Sciatic nerve (tissue), 2 donors: ENCODE measurements at regions of chr11 and their contacts with region 1.

Region 1: GRCh38 chr11:84788220-84788619 is 838.9 kb downstream of the DLG2 start:
- DNase-seq: no peak
- ATAC-seq: no peak

Region 2: GRCh38 chr11:83151274-83151977 is 1636.8 kb before region 1 on chr11:
- intact Hi-C with region 1: no loop called
- DNase-seq: no peak
- ATAC-seq: no peak

Region 3: DNA sequence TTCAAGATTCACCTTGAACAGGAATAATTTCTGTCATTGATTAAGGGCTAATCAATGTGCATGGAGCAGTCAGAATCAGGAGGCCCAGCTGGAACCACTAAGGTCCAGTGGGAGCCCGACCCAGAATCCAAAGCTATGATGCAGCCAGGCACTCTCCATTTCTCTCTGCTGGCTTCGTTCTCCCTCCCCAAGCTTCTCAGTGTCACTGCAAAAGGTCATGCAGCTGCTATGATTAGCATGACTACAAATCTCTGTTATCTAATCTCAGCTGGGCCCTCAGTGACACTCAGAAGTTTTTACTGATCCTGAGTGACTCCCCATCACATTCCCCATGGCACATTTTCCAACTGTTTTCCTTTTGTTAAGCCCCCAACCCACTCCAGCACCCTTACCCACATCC is 1981.0 kb after region 1 on chr11:
- intact Hi-C with region 1: loop called (anchors 5 kb)
- DNase-seq: no peak
- ATAC-seq: peak; percentile 59